PC-9 (cell line): ENCODE measurements at regions of chr7 and their contacts with region 1.

Region 1: DNA sequence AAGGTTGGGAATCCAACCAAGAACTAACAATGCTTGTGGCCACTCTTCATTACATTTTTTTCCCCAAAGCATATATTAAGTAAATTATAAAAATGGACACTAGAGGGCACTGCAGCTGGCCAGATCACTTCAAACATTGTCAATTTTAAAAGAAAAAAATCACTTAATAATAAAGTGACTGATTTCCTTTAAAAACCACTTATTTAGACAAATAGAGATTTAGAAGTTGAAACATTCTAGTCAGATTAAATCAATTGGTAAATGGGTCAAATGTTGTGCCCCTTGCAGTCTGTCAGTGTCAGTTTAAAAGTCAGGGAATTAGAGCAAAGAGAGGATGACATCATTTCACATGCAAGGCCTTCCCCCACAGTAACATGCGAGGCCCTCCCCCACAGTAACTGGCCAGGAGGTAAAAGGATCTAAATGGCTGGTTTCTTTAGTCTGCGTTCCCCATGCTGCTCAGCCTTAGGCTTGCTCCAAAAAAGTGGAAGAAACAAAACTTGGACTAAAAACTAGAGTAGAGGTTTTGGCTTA is 177.9 kb downstream of the SKAP2 start:
- DNase-seq: peak in 1 of 2 experiments; percentile 7
- H3K4me3 ChIP-seq: no peak overlapping the region
- H3K27ac ChIP-seq: no peak overlapping the region
- H3K4me1 ChIP-seq: no peaks in the 10 kb centered on the region
- H3K27me3 ChIP-seq: no peaks in the 10 kb centered on the region
- CTCF ChIP-seq: peak; percentile 94

Region 2: GRCh38 chr7:26556071-26556881 is 130.2 kb before region 1 on chr7:
- CTCF ChIA-PET with region 1: no interaction called
- POLR2A ChIA-PET with region 1: no interaction called
- intact Hi-C with region 1: no loop called
- DNase-seq: no peak
- H3K4me3 ChIP-seq: no peak overlapping the region
- H3K27ac ChIP-seq: no peak overlapping the region
- H3K4me1 ChIP-seq: peaks cover 14% of the 10 kb centered on the region
- H3K27me3 ChIP-seq: no peaks in the 10 kb centered on the region
- CTCF ChIP-seq: no peak

Region 3: DNA sequence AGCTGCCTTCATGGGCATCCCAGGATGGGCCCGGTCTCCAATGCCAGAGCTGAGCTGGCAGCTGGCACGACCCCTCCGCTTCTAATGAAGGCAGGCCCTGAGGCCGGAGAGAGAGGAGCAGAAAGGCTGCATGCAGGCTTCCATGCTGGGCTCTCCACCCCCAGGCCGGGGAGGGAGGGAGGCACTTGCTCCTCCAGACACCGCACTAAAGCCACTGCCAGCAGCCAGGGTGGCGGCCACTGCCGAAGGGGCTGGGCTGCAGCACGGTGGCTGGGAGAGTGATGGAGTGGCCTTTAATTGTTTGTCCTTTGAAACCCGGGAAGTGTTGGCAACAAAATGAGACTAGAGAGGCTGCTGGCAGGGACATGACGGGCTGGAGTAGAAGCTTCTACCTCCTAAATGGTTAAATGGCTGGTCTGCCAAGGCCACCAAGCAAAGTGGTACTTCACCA is 58.6 kb before region 1 on chr7:
- CTCF ChIA-PET with region 1: interaction called, 14 read pairs
- POLR2A ChIA-PET with region 1: no interaction called
- intact Hi-C with region 1: no loop called
- DNase-seq: no peak
- H3K4me3 ChIP-seq: no peak overlapping the region
- H3K27ac ChIP-seq: no peak overlapping the region
- H3K4me1 ChIP-seq: no peaks in the 10 kb centered on the region
- H3K27me3 ChIP-seq: no peaks in the 10 kb centered on the region
- CTCF ChIP-seq: no peak

Region 4: DNA sequence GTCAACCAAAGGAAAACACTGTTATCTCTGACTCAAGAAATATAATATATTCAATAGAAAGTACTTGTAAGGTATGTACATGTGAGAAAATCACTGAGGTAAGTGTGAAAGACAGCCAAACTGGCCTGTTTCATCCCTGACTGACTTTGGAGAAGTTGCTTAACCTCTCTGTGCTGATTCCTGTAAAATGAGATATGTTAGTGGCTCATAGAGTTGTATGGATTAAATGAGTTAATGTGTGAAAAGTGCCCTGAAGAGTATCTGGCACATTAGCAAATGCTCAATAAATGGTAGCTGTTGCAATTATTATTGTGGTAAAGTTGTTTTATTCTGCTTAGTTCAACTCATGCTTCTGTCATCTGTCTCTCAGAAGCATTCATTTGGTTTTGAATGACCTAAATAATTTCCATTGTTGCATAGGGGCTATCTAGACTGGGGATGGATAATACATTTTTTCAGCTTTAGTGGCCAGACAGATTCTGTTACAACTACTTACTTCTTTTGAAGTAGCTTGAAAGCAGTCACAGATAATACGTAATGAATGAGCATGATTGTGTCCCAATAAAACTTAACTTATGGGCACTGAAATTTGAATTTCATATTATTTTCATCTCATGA is 93.6 kb after region 1 on chr7:
- CTCF ChIA-PET with region 1: interaction called, 10 read pairs
- POLR2A ChIA-PET with region 1: no interaction called
- intact Hi-C with region 1: no loop called
- DNase-seq: no peak
- H3K4me3 ChIP-seq: no peak overlapping the region
- H3K27ac ChIP-seq: no peak overlapping the region
- H3K4me1 ChIP-seq: no peaks in the 10 kb centered on the region
- H3K27me3 ChIP-seq: no peaks in the 10 kb centered on the region
- CTCF ChIP-seq: no peak

Region 5: GRCh38 chr7:26853788-26854393 is 167.4 kb after region 1 on chr7:
- CTCF ChIA-PET with region 1: no interaction called
- POLR2A ChIA-PET with region 1: no interaction called
- intact Hi-C with region 1: loop called (anchors 2 kb)
- DNase-seq: peak in 1 of 2 experiments; percentile 60
- H3K4me3 ChIP-seq: no peak overlapping the region
- H3K27ac ChIP-seq: no peak overlapping the region
- H3K4me1 ChIP-seq: peaks cover 24% of the 10 kb centered on the region
- H3K27me3 ChIP-seq: no peaks in the 10 kb centered on the region
- CTCF ChIP-seq: peak; percentile 90